ENCODE measurements at regions of chr4 and their contacts with region 1.

Region 1: DNA sequence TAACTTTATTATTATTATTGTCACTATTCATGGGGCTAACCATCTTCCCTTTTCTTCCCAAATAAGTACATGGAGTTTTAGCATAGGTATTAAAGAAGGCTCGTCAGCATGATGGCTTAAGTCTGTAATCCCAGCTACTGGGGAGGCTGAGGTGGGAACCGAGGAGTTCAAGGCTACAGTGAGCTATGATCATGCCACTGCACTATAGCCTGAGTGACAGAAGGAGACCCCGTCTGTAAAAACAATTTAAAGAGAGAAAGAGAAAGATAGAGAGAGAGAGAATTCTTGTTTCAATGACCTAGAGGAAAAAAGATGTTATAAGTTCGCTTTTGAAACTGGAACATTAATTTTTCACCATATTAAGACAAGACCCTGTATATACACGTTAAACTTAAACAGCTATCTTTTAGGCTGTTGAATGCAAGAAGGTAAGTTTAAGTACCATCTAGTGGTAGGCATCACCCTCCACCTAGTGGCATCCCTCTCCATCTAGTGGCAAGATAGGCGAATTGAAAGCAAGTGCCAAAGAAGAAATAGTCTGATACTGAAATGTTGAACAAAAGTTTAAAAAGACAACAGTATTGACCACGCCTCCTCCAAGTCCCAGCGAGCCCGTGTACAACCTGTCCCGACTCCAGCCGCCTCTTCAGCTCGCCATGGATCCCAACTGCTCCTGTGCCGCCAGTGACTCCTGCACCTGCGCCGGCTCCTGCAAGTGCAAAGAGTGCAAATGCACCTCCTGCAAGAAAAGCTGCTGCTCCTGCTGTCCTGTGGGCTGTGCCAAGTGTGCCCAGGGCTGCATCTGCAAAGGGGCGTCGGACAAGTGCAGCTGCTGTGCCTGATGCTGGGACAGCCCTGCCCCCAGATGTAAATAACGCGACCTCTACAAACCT is 26.0 kb upstream of the YTHDC1 start:
- DNase-seq: peak; percentile 46 to 47
- H3K4me3 ChIP-seq: no peak overlapping the region
- H3K27ac ChIP-seq: no peak overlapping the region
- H3K4me1 ChIP-seq: peaks cover 0 to 4% of the 10 kb centered on the region in 2 donors
- H3K27me3 ChIP-seq: no peaks in the 10 kb centered on the region
- CTCF ChIP-seq: peak; percentile 54 to 94 (median 86)
- POLR2A ChIP-seq: no peak

Region 2: DNA sequence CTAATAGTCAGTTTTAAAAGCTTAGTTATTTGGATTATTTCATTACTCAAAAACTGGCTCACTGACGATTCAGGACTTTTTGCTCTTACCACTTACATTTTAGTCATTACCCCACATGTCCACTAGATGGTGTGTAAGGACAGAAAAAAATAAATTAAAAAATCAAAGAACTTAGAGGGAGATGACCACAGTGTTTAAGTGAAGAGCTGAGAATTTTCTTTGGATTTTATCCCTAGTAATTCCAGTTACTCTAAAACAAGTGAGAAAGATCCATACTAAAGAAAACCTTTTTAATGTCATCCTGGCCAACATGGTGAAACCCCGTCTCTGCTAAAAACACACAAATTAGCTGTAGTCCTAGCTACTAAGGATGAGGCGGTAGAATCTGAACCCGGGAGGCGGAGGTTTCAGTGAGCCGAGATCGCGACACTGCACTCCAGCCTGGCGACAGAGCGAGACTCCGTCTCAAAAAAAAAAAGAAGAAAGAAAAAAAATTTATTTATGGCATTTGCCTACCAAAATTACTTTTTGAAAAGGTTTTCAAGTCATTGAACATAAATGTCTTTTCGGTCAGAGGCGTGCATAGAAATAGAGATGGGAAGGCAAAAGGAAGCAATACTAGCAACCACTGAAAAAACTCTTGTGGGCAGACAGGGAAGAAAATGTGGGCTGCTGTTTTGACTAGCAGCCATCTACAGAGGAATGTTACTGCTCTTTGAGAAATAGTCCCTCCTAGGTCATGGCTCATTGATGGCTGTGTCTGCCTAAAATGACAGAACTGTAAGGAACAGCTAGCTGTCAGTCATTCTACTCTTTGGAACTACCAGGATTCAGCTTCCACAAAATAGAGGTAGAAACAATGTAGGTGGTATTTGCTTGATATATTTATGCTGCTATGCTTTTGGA is 103.8 kb before region 1 on chr4:
- intact Hi-C with region 1: loop called (anchors 5 kb)
- DNase-seq: no peak
- H3K4me3 ChIP-seq: no peak overlapping the region
- H3K27ac ChIP-seq: no peak overlapping the region
- H3K4me1 ChIP-seq: no peaks in the 10 kb centered on the region
- H3K27me3 ChIP-seq: no peaks in the 10 kb centered on the region
- CTCF ChIP-seq: peak; percentile 49 to 83 (median 68)
- POLR2A ChIP-seq: no peak